PC-3 (cell line): ENCODE measurements at regions of chr7 and their contacts with region 1.

Region 1: GRCh38 chr7:66033471-66034385 is 41.9 kb upstream of the ASL start:
- DNase-seq: no peak
- ATAC-seq: no peak
- H3K4me3 ChIP-seq: no peak overlapping the region
- H3K27ac ChIP-seq: no peak overlapping the region
- H3K4me1 ChIP-seq: no peaks in the 10 kb centered on the region
- H3K27me3 ChIP-seq: no peaks in the 10 kb centered on the region
- CTCF ChIP-seq: no peak

Region 2: DNA sequence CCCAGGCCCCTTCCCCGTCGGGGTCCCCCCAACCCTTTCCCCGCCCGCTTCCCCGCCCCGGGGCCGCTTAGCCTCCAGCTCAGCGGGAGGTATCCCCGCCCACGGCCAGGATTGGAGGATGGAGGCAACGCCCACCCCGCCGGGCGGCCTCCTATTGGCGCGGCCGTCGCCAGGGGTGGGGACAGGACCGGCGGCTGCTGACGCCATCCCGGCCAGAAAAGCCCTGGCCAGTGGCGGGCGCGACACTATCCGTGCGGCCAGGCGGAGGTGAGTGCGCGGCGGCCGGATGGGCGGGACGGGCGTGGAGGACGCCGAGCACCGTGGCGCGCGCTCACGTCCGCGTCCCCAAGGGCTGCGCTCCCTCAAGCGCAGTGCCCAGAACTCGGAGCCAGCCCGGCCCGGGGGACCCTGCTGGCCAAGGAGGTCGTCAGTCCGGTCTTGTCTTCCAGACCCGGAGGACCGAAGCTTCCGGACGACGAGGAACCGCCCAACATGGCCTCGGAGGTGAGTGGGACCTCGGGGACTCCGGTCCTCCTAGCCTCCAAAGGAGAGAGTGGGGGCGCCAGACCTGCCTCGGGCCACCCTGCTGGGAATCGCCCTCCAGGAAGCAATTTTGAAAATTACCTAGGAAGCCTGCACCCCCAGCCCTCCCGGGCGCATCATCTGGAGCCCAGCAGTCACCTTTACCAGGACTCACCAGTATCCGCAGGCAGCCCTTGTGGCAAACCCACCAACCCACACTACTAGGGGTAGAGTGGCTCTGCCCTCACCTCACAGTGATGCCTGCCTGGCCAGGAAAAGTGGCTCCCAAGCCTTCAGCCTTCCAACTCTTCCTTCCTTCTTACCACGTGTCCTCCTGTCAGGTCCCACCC is 42.1 kb after region 1 on chr7 and contains the start of gene ASL:
- CTCF ChIA-PET with region 1: interaction called, 13 read pairs
- POLR2A ChIA-PET with region 1: no interaction called
- intact Hi-C with region 1: loop called (anchors 5 kb)
- DNase-seq: peak; percentile 94
- ATAC-seq: peak; percentile 99
- H3K4me3 ChIP-seq: peak within 1 kb of the TSS; percentile 96
- H3K27ac ChIP-seq: no peak within 1 kb of the TSS
- H3K4me1 ChIP-seq: peaks cover 10% of the 10 kb centered on the region; the same call in 1 of the 2 replicates
- H3K27me3 ChIP-seq: no peaks in the 10 kb centered on the region
- CTCF ChIP-seq: no peak
- total RNA-seq, gene ASL: 55.9 and 69.0 TPM in 2 replicates

Region 3: DNA sequence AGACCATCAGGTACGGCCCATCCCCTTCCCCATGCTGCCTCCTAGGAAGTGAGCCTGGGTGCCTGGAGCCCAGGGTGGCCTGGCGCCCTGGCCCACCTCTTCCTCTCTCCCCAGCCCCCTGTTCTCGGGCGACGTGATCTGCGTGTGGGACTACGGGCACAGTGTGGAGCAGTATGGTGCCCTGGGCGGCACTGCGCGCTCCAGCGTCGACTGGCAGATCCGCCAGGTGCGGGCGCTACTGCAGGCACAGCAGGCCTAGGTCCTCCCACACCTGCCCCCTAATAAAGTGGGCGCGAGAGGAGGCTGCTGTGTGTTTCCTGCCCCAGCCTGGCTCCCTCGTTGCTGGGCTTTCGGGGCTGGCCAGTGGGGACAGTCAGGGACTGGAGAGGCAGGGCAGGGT is 58.9 kb after region 1 on chr7:
- CTCF ChIA-PET with region 1: no interaction called
- POLR2A ChIA-PET with region 1: no interaction called
- intact Hi-C with region 1: no loop called
- DNase-seq: no peak
- ATAC-seq: no peak
- H3K4me3 ChIP-seq: no peak overlapping the region
- H3K27ac ChIP-seq: no peak overlapping the region
- H3K4me1 ChIP-seq: no peaks in the 10 kb centered on the region
- H3K27me3 ChIP-seq: no peaks in the 10 kb centered on the region
- CTCF ChIP-seq: no peak

Region 4: DNA sequence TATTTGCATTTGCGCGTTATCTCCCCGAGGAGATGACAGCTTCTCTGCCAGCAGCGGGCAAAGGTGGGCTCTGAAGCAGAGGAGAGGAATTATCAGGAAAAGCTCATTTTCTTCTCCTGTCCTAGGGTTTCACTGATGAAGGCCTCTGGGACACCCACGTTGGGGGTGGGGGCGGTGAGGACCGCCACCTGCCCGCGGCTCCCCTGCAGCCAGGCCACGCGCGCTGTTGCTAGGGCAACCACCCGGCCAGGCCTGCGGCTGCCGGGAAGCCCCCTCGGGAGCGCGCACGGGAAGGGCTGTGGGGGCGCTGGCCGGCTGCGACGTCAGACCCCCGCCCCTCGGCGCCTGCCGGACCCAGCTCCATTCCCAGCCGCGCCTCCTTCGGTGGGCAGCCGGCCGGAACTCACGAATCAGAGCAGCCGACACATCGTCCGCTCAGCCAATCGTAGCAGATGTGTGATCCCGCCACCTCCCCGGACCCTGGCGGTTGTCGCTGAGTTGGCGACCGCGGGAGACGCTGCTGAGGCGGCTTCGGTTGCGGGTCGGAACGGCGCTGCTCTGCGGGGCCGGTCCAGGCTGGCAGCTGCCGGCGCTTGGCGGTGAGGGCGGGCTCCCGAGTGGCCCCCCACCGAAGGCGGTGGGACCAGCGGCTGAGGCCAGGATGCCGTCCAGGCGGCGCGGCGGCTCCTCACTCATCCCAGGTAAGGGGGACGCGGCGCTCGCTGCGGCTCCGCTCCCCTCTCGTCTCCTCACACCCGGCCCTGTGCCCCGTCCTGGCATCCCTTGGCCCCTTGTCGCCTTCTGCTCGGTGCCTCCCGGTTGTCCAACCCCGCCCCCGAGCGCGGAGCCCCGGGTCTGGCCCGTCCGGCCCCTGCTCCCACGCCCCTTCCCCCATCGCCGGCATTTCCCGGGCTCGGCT is 171.4 kb after region 1 on chr7 and contains the start of gene TPST1:
- CTCF ChIA-PET with region 1: no interaction called
- POLR2A ChIA-PET with region 1: no interaction called
- intact Hi-C with region 1: loop called (anchors 10 kb)
- DNase-seq: peak; percentile 85
- ATAC-seq: peak; percentile 94
- H3K4me3 ChIP-seq: peak within 1 kb of the TSS; percentile 71
- H3K27ac ChIP-seq: no peak within 1 kb of the TSS
- H3K4me1 ChIP-seq: peaks cover 7% of the 10 kb centered on the region
- H3K27me3 ChIP-seq: no peaks in the 10 kb centered on the region
- CTCF ChIP-seq: peak; percentile 50
- total RNA-seq, gene TPST1: 12.7 and 14.4 TPM in 2 replicates

Region 5: GRCh38 chr7:66263936-66264335 is 230.2 kb after region 1 on chr7:
- CTCF ChIA-PET with region 1: interaction called, 15 read pairs
- POLR2A ChIA-PET with region 1: no interaction called
- intact Hi-C with region 1: no loop called
- DNase-seq: no peak
- ATAC-seq: no peak
- H3K4me3 ChIP-seq: no peak overlapping the region
- H3K27ac ChIP-seq: no peak overlapping the region
- H3K4me1 ChIP-seq: no peaks in the 10 kb centered on the region
- H3K27me3 ChIP-seq: no peaks in the 10 kb centered on the region
- CTCF ChIP-seq: no peak